Psoas muscle (tissue), 8 donors: ENCODE measurements at regions of chr6 and their contacts with region 1.

Region 1: DNA sequence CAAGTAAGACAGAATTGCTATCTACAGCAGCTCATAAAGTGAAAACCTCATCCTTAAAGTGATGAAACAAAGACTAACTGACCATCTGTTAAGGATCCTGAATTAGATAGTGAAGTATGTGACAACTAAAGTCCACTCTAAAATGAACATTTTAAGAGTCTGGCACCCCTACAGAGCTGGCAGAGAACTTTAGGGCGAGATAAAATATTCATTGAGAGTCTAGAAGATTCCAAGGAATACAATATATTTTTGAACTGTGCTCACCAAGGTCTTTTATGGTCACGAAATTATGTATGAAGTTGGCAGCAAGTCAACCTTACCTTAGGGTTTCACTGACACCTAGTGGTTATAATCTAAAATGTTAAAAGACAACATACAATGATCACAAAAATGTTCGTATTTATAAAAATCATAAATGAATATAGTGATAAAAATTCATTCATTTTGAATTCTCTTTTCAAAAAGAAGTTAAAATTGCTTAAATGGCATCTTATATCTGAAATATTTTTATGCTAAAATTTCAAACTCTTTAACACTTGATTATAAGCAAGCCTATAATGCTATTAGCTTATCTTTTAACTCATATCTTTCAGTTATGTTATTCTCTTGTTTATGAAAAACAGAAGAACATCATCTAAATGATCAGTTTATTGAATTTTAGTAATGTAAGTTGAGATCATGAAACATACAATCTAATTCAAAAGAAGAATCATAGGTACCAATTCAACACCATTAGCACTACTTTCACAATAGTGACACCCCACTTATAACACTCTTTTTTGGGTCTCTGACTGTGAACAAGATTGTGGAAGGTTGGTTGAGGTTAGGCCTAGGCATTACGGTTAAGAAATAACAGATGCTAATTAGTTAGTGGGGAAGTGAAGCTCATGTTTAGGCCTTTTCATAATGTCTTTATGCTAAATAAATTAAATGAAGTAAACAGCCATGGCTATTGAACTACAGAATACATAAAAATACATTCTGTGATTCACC is 27.5 kb downstream of the RSPH3 start:
- DNase-seq: no peak
- ATAC-seq: peak; percentile 36 to 74 (median 52)
- H3K4me3 ChIP-seq: no peak overlapping the region
- H3K27ac ChIP-seq: no peak overlapping the region
- H3K4me1 ChIP-seq: no peaks in the 10 kb centered on the region
- H3K27me3 ChIP-seq: no peaks in the 10 kb centered on the region
- CTCF ChIP-seq: peak; percentile 63

Region 2: GRCh38 chr6:158518191-158519127 is 454.1 kb before region 1 on chr6:
- intact Hi-C with region 1: no loop called
- DNase-seq: peak in 1 of 2 donors; percentile 32
- ATAC-seq: peak in 3 of 4 donors; percentile 70 to 84 (median 71)
- H3K4me3 ChIP-seq: peak overlapping the region; percentile 12
- H3K27ac ChIP-seq: no peak overlapping the region
- H3K4me1 ChIP-seq: peaks cover 4% of the 10 kb centered on the region
- H3K27me3 ChIP-seq: peaks cover 0 to 46% (median 4%) of the 10 kb centered on the region in 3 donors
- CTCF ChIP-seq: peak; percentile 32

Region 3: GRCh38 chr6:158704181-158704822 is 268.2 kb before region 1 on chr6:
- intact Hi-C with region 1: loop called (anchors 2 kb)
- DNase-seq: peak; percentile 86 to 91
- ATAC-seq: peak; percentile 86 to 91 (median 90)
- H3K4me3 ChIP-seq: peak overlapping the region; percentile 61
- H3K27ac ChIP-seq: no peak overlapping the region
- H3K4me1 ChIP-seq: peaks cover 26% of the 10 kb centered on the region
- H3K27me3 ChIP-seq: no peaks in the 10 kb centered on the region
- CTCF ChIP-seq: peak; percentile 91

Region 4: GRCh38 chr6:158789434-158789917 is 183.1 kb before region 1 on chr6:
- intact Hi-C with region 1: loop called in 1 of 2 experiments (anchors 5 kb)
- DNase-seq: no peak
- ATAC-seq: no peak
- H3K4me3 ChIP-seq: no peak overlapping the region
- H3K27ac ChIP-seq: no peak overlapping the region
- H3K4me1 ChIP-seq: no peaks in the 10 kb centered on the region
- H3K27me3 ChIP-seq: no peaks in the 10 kb centered on the region
- CTCF ChIP-seq: no peak